ENCODE measurements at regions of chr16 and their contacts with region 1.

Region 1: GRCh38 chr16:28089205-28089991 is 25.9 kb upstream of the GSG1L start:
- DNase-seq: no peak
- ATAC-seq: no peak
- H3K4me3 Mint-ChIP-seq: no peak overlapping the region
- H3K27ac Mint-ChIP-seq: no peak overlapping the region
- H3K4me1 Mint-ChIP-seq: peaks cover 2% of the 10 kb centered on the region
- H3K27me3 Mint-ChIP-seq: no peaks in the 10 kb centered on the region
- CTCF ChIP-seq: no peak

Region 2: DNA sequence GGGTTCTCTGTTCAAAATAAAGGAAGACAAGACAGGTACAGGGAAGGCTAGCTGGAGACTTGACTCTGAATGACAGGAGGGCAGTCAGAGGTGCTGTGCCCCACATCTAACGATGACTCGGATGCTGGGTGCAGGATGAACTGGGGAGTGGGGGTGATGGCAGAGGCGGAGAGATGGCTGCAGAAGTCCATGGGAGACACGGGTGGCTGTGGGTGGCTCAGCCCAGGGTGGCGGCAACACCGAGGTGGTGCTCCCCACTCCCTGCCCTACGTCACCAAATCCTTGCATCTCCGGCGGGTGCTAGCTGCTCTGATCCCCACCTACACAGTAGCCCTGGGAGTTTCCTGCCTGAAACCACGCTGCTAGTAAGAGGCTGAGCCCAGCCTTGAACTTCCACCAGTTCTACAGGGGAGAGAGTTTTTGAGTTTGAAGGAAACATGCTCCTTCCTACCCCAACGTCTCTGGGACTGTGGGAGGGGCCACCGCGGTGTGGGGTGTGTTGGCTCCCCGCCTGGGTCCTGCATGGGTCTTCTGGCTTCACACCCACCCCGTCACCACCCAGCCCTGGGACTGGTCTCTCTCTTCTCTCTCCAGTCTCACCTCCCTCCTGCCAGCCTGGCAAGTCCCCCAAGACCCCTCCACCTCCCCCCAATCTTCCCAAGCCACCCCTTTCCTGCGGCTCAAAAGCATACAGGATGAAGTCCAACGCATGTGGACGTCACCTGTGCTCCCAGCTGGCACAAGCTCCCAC is 30.4 kb before region 1 on chr16:
- CTCF ChIA-PET with region 1: no interaction called
- POLR2A ChIA-PET with region 1: no interaction called
- intact Hi-C with region 1: no loop called
- DNase-seq: no peak
- ATAC-seq: no peak
- H3K4me3 Mint-ChIP-seq: no peak overlapping the region
- H3K27ac Mint-ChIP-seq: no peak overlapping the region
- H3K4me1 Mint-ChIP-seq: peaks cover 1% of the 10 kb centered on the region
- H3K27me3 Mint-ChIP-seq: peaks cover 36% of the 10 kb centered on the region
- CTCF ChIP-seq: no peak

Region 3: DNA sequence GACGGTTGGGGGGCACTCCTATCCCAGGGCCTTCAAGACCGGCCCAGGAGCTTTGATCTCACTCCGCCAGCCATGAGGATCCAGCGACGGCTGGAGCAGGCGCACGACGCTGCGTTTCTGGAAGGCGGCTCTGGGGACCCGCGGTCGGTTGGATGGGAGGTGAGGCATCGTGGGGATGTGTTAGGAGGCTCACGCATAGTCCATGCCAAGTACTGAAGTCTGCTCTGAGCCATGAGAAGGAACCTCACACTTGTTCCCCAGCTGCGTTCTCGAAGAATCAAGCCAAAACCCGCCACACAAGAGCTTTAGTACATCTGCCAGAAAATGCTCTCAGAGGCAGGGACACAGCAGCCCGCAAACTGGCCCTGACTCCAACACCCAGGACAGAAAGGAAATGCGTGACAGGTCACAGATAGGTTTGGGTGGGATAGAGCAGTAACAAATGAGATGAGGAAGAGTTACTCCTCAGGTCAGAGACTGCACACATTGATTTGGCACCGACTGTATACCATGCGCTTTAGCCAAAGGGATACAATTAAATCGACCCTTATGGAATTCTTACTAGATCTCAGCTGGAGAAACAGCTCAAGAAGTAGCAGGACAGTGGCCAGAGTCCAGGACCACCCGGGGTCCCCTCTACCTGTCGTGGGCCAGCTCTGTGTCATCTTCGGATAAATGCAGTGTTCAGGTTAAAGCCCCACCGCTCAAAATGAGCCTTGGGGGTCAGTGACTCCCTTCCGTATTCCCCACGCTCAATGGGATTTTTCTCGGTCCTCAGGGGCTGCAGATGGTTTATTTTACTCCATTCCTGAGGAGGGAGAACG is 19.2 kb before region 1 on chr16:
- CTCF ChIA-PET with region 1: no interaction called
- POLR2A ChIA-PET with region 1: no interaction called
- intact Hi-C with region 1: loop called (anchors 1 kb)
- DNase-seq: no peak
- ATAC-seq: no peak
- H3K4me3 Mint-ChIP-seq: no peak overlapping the region
- H3K27ac Mint-ChIP-seq: no peak overlapping the region
- H3K4me1 Mint-ChIP-seq: no peaks in the 10 kb centered on the region
- H3K27me3 Mint-ChIP-seq: peaks cover 16% of the 10 kb centered on the region
- CTCF ChIP-seq: no peak

Region 4: DNA sequence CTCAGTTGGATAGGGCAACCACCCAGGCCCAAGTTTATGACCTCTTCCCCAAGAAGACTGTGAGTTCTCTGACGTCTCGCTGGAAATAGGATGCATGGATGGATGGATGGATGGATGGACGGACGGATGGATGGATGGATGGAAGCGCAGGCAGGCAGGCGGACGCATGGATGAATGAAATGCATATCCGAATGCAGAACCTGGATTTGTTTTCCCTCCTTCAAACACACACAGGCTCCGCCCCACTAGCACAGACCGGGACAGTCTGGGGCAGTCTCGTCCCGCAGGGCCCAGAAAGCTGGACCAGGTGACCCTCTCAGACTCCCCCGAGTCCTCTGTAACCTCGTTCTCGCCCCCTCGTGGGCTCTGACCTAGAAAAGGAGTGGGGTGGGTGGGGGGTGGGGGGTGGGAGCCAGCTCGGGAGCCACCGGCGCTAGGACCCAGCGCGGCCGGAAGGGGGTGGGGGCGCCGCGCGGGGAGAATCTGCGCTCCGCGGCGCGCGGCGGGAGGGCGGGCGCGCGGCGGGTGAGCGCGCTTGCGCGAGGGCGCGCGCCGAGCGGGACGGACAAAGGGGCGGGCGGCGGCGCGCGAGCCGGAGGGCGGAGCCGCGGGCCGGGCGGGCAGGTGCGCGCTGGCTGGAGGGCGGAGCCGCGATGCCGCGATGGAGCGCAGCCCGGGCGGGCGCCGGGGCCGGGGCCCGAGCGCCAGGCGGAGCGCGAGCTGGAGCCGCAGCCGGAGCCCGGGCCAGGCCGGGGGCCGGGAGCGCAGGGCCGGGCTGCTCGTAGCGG is 202.7 kb after region 1 on chr16 and contains the start of gene SBK1:
- CTCF ChIA-PET with region 1: no interaction called
- POLR2A ChIA-PET with region 1: no interaction called
- intact Hi-C with region 1: no loop called
- DNase-seq: peak; percentile 87
- ATAC-seq: peak; percentile 97
- H3K4me3 Mint-ChIP-seq: peak within 1 kb of the TSS; percentile 82
- H3K27ac Mint-ChIP-seq: peak within 1 kb of the TSS; percentile 76
- H3K4me1 Mint-ChIP-seq: peaks cover 12% of the 10 kb centered on the region
- H3K27me3 Mint-ChIP-seq: peaks cover 11% of the 10 kb centered on the region
- CTCF ChIP-seq: no peak
- total RNA-seq, gene SBK1: 0.39 and 0.58 TPM in 2 replicates

Measured in activated B cell treated with CpG ODN at 0.5 μM for 24 hours (primary cell).